Head of caudate nucleus (tissue), 42 donors: ENCODE measurements at regions of chr7 and their contacts with region 1.

Region 1: GRCh38 chr7:116862234-116862950 is at the start of gene CAPZA2:
- DNase-seq: peak; percentile 75 to 96 (median 91)

Region 2: GRCh38 chr7:116929914-116930913 is 67.8 kb after region 1 on chr7:
- intact Hi-C with region 1: no loop called
- DNase-seq: peak; percentile 68 to 95 (median 88)

Region 3: DNA sequence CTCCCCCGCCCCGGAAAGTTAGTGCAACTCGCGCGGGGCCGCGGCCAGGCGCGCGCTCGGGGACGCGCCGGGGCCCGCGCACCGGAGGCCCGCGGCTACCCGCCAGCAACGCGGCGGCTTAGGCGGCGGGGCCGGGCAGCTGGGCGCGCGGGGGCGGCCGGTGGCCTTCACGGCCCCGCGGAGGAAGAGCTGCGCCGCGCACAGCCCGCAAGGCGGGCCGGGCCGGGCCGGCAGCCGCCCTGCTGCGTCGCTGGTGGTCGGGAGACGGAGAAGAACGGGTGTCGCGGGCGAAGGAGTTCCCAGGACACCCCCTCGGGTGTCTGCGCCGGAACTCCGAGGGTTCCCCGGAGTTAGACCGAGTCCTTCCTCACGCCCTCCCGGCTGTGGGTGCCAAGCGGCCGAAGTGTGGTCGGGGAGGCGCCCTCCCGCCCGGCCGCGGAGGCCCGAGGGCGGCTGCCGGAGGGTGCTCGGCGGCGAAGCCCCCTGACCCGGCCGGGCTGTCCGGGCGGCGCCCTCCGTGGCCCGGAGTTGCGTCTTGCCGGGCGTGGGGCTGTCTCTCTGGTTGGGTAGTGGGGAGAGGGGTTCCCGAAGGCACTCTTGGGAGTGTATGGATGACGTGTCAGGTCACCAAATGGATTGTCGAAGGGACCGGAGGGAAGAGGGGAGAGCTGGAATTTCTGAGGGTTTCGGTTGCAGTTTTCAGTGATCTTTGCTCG is 91.5 kb after region 1 on chr7:
- intact Hi-C with region 1: loop called (anchors 10 kb)
- DNase-seq: peak in 39 of 42 donors; percentile 17 to 82 (median 56)